ENCODE measurements at regions of chr16 and their contacts with region 1.

Region 1: DNA sequence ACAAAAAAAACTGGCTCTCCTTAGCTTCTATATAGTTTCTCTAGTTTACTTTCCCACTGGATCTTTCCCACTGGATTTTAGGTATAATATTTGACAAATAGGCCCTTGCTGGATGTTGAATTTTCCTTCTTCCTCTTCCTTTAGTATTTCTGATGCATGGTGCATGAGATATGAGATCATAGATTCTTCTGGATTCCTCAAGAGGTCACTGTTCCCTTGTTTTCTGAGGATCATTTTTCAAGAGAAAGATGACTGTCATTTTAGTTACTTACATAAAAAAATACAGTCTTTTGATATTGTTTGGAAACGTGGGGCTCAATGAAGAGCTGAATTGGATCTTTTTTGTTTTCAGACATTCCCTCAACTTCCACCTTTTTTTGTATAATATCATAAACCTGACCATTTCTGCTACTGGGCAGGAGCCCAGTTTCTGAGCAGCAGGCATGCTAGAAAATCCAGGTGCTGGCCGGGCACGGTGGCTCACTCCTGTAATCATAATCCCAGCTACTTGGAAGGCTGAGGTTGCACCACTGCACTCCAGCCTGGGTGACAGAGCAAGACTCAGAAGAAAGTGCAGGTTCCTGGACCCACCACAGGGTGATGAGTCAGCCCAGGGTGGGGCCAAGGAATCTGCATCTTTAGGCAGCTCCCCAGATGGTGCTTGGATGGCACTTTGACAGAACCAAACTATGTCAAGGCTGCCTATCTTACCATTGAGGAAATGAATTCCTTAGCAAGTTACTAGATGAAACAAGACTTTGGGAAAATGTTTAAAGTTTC is 70.3 kb downstream of the SDR42E1 start:
- DNase-seq: peak in 1 of 2 experiments; percentile 45
- H3K4me3 ChIP-seq: no peak overlapping the region
- H3K27ac ChIP-seq: no peak overlapping the region
- H3K4me1 ChIP-seq: peaks cover 7 to 31% (median 29%) of the 10 kb centered on the region in 4 experiments
- H3K27me3 ChIP-seq: 0 out of 7 replicates have a peak, but pooled peaks cover 0 to 2% (median 0%) of the 10 kb centered on the region in 4 experiments
- CTCF ChIP-seq: peak in 2 of 3 experiments; percentile 20 to 43; a peak in 2 of 4 replicates
- EP300 ChIP-seq: no peak
- POLR2A ChIP-seq: no peak
- RAD21 ChIP-seq: peak; percentile 62 to 64

Region 2: DNA sequence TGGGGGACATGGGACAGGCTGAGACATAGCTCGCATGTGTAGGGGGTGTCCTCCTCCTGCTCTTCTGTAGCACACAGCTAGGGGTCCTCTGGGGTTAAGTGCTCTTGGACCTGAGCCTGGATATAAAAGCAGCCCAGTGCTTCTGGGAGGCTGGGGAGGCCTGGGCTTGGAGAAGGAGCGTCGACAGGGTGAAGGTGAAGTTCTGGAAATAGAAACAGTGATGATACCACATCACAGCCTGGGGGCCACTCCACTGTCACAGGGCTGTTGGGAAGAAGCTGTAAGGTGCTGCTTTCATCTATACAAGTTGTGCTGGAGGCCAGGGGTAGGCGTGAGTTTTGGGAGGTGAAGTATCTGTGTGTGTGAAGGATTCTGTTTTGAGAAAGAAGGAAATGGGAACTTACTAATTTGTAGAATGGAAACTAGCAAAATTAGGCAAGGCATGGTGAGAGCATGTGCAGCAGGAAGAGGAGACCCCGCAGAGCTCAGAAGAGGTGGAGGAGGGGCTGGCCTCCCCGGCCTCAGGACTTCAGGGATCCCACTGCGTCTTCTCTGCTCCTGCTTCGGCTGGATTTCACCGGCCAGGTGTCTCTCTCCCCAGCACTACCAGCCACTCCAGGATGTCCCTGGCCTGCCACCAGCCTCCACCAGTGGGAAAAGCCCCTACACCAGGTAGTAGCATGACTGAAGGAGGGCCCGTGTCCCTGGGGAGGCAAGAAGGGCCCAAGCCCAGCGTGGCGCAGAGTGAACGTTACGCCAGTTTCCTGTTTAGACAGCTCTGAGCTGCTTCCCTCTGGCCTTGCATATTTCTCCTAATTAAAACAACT is 142.4 kb before region 1 on chr16:
- CTCF ChIA-PET with region 1: no interaction called
- POLR2A ChIA-PET with region 1: no interaction called
- DNase-seq: no peak
- H3K4me3 ChIP-seq: no peak overlapping the region
- H3K27ac ChIP-seq: no peak overlapping the region; the same call in 1 of the 2 replicates
- H3K4me1 ChIP-seq: peaks cover 0 to 5% (median 2%) of the 10 kb centered on the region in 4 experiments; a peak in 2 of 7 replicates
- H3K27me3 ChIP-seq: no peaks in the 10 kb centered on the region
- CTCF ChIP-seq: peak in 1 of 3 experiments; percentile 2; a peak in 1 of 4 replicates
- EP300 ChIP-seq: no peak
- POLR2A ChIP-seq: no peak
- RAD21 ChIP-seq: peak; percentile 9 to 19; a peak in 1 of 4 replicates

Region 3: DNA sequence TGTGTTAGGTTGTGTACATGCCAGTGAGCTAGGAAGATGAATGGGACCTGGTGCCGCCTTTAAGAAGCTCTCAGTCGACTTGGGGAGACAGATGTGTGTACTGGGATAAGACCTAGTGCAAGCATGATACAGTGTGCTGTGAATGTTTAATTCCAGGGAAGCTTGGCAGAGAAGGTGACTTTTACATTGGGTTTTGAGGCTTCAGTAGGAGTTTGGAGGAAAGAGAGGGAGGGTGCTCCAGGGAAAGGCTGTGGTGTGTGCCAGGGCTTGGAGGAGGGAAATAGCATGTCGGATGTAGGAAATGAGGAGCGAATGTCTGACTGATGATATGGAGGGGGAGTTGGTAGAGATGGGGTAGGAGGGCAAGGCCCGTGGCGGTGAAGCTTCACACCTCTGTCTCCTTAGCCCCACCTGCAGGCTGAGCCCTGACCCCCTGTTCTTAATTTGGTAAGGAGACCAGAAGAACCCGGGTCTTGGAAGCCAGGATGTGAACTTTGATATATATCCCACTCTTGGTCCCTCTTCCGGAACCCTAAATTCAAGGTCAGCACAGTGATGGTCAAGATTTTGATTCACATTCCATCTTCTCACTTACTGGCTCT is 85.3 kb before region 1 on chr16:
- CTCF ChIA-PET with region 1: no interaction called
- POLR2A ChIA-PET with region 1: no interaction called
- DNase-seq: no peak
- H3K4me3 ChIP-seq: no peak overlapping the region
- H3K27ac ChIP-seq: no peak overlapping the region
- H3K4me1 ChIP-seq: no peaks in the 10 kb centered on the region
- H3K27me3 ChIP-seq: no peaks in the 10 kb centered on the region
- CTCF ChIP-seq: peak; percentile 28 to 60 (median 49); a peak in 3 of 4 replicates
- EP300 ChIP-seq: no peak
- POLR2A ChIP-seq: no peak
- RAD21 ChIP-seq: peak; percentile 50 to 66

Region 4: DNA sequence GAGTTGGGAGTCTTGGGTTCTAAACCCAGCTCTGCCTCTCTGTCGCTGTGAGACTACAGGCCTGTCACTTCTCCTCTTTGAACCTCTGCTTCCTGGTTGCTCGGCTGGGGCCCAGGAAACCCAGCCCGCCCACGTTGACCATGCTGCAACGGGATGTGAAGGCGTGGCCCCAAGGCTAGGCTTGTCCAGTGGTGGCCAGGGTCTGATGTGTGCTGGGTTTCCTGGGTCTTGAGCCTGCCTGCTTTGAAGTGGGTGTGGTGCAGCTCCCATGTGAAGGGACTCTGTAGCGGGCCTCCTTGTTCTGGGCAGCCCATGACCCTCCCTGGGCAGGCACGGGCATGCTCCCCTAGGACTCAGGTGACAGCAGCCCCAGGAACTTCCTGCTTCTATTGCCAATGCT is 12.0 kb before region 1 on chr16:
- CTCF ChIA-PET with region 1: interaction called, 44 read pairs
- POLR2A ChIA-PET with region 1: interaction called, 3 read pairs
- DNase-seq: peak in 1 of 2 experiments; percentile 43
- H3K4me3 ChIP-seq: no peak overlapping the region
- H3K27ac ChIP-seq: no peak overlapping the region
- H3K4me1 ChIP-seq: peaks cover 0 to 2% (median 0%) of the 10 kb centered on the region in 4 experiments; a peak in 2 of 7 replicates
- H3K27me3 ChIP-seq: no peaks in the 10 kb centered on the region
- CTCF ChIP-seq: no peak
- EP300 ChIP-seq: no peak
- POLR2A ChIP-seq: no peak
- RAD21 ChIP-seq: no peak

Region 5: GRCh38 chr16:82031116-82032084 is 90.4 kb after region 1 on chr16:
- CTCF ChIA-PET with region 1: interaction called, 12 read pairs
- POLR2A ChIA-PET with region 1: no interaction called
- DNase-seq: no peak
- H3K4me3 ChIP-seq: no peak overlapping the region
- H3K27ac ChIP-seq: no peak overlapping the region
- H3K4me1 ChIP-seq: no peaks in the 10 kb centered on the region; a peak in 1 of 7 replicates
- H3K27me3 ChIP-seq: no peaks in the 10 kb centered on the region
- CTCF ChIP-seq: peak in 2 of 3 experiments; percentile 69 to 71; a peak in 3 of 4 replicates
- EP300 ChIP-seq: no peak
- POLR2A ChIP-seq: no peak
- RAD21 ChIP-seq: peak; percentile 86 to 92

Measured in H1 (cell line).